ENCODE measurements at regions of chr18 and their contacts with region 1.

Region 1: DNA sequence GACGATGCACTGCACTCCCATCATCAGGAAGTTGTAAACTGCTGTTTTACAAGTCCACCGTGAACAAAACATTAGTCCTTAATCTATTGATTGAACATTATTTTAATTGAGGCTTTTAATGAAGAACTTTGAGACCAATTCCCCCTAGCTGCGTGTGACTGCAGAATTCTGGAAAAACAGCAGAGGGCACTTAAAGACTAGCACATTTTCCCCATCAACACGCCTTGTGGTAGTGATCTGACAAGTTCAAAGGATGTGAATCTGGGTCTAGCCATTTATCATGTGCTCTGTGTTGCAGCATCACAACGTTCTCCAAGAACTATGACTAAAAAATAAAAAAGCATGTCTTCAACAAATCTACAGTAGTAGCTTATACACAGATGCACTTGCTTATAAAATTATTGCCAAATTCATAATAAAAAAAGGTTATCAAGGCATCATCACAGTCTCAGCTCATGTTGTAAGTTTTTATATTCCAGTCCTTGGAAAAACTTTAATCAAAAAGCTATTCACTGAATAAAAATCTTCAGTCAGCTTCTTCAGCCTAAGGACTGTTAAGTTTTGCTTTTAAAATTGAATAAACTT is 35.8 kb downstream of the SKOR2 start:
- DNase-seq: no peak
- H3K4me3 ChIP-seq: no peak overlapping the region
- H3K27ac ChIP-seq: no peak overlapping the region
- H3K4me1 ChIP-seq: no peaks in the 10 kb centered on the region
- H3K27me3 ChIP-seq: peaks cover 95% of the 10 kb centered on the region
- CTCF ChIP-seq: peak; percentile 70

Region 2: DNA sequence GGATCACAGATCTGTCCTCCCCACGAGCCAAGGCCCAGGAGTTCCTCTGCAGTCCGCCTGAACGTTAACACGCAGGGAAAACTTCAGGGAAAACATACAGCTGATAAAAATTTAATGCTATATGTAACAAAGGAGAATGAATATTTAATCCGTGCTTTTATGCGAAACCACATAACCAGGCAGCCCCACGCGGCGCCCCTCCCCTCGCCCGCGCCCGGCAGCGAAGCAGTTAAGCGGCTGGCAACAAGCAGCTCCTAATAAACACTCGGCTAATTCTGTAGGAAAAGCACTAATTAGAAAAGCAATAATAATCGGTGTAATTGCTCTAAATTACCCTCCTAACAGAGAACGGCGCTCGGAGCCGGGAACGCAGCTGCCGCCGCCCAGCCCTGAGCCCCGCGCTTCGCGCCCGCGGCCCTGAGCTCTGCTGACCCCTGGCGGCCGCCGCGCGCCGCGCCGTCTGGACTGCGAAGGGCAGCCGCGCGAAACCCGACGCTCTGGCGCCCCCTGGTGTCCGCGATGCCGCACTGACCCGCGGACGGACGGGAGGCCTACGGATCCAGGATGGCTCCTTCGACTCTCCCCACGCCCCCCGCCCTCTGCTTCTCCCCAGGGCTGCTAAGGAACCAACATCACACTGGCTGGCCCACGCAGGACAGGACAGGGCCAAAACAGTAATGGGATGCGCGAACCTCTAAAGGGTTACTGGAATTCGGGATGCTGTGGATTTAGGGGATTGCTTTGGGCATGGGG is 533.4 kb after region 1 on chr18:
- intact Hi-C with region 1: loop called (anchors 10 kb)
- DNase-seq: peak; percentile 74
- H3K4me3 ChIP-seq: peak overlapping the region; percentile 52
- H3K27ac ChIP-seq: no peak overlapping the region
- H3K4me1 ChIP-seq: peaks cover 4% of the 10 kb centered on the region
- H3K27me3 ChIP-seq: peaks cover 46% of the 10 kb centered on the region
- CTCF ChIP-seq: peak; percentile 100